ENCODE measurements at regions of chr9 and their contacts with region 1.

Region 1: GRCh38 chr9:98536542-98537173 is 172.1 kb downstream of the GABBR2 start:
- ATAC-seq: no peak
- H3K4me3 ChIP-seq: no peak overlapping the region
- H3K27ac ChIP-seq: no peak overlapping the region
- H3K4me1 ChIP-seq: peaks cover 0 to 9% of the 10 kb centered on the region in 2 donors

Region 2: DNA sequence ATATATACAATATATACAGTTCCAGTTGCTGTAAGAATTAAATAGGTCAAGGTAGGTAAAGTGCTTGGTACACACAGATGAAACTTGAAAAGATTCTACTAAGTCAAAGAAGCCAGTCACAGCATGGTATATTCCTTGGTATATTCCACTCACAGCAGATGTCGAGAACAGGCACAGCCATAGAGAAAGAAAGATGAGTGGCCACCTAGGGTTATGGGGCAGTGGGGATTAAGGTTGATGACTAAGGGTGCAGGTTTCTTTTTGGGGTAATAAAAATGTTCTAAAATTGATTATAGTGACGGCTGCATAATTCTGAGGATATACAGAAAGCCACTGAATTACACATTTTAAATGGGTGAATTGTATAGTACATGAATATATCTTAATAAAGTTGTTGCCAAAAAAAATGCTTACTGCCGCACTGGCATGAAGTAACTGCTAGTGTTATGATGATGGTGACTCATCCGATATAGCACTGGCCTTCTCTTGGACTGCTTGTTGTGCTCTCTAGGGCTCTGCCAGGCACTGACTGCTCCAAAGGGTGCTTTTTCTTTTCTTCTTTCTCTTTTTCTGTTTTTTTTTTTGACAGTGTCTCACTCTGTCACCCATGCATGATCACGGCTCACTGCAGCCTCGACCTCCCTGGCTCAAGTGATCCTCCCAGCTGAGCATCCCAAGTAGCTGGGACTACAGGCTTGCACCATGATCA is 304.7 kb before region 1 on chr9:
- in situ Hi-C with region 1: no loop called
- ATAC-seq: peak in 3 of 8 experiments; percentile 58 to 74 (median 62)
- H3K4me3 ChIP-seq: no peak overlapping the region
- H3K27ac ChIP-seq: no peak overlapping the region
- H3K4me1 ChIP-seq: no peaks in the 10 kb centered on the region

Region 3: GRCh38 chr9:98429613-98430012 is 107.0 kb before region 1 on chr9:
- in situ Hi-C with region 1: loop called in 1 of 9 experiments (anchors 25 kb)
- ATAC-seq: peak in 2 of 8 experiments; percentile 68 to 77
- H3K4me3 ChIP-seq: no peak overlapping the region
- H3K27ac ChIP-seq: no peak overlapping the region
- H3K4me1 ChIP-seq: no peaks in the 10 kb centered on the region